Dorsolateral prefrontal cortex (tissue), 120 donors: ENCODE measurements at regions of chr3 and their contacts with region 1.

Region 1: GRCh38 chr3:47475570-47476329 is at the start of gene SCAP:
- DNase-seq: peak; percentile 81 to 93 (median 89)
- H3K4me3 ChIP-seq: peak within 1 kb of the TSS; percentile 56 to 99 (median 90)
- H3K27ac ChIP-seq: peak within 1 kb of the TSS; percentile 49 to 97 (median 89)
- H3K27me3 ChIP-seq: no peaks in the 10 kb centered on the region
- CTCF ChIP-seq: peak; percentile 78 to 100 (median 98)
- total RNA-seq, gene SCAP: 68.4 to 123 (median 92.0) TPM

Region 2: DNA sequence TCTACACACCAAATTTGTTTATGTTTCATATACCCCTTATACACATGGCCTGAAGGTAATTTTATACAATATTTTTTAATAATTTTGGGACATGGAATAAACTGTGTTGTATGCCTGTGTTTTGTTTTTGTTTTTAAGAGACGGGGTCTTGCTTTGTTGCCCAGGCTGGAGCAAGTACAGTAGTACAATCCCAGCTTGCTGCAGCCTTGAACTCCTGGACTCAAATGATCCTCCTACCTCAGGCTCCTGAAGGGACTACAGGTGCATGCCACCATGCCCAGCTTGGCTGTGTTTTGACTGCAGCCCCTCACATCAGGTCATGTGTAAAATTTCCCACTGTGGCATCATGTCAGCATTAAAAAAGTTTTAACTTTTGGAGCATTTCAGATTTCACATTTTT is 330.5 kb before region 1 on chr3:
- intact Hi-C with region 1: no loop called
- DNase-seq: no peak
- H3K4me3 ChIP-seq: no peak overlapping the region
- H3K27ac ChIP-seq: no peak overlapping the region
- H3K27me3 ChIP-seq: no peaks in the 10 kb centered on the region
- CTCF ChIP-seq: no peak

Region 3: DNA sequence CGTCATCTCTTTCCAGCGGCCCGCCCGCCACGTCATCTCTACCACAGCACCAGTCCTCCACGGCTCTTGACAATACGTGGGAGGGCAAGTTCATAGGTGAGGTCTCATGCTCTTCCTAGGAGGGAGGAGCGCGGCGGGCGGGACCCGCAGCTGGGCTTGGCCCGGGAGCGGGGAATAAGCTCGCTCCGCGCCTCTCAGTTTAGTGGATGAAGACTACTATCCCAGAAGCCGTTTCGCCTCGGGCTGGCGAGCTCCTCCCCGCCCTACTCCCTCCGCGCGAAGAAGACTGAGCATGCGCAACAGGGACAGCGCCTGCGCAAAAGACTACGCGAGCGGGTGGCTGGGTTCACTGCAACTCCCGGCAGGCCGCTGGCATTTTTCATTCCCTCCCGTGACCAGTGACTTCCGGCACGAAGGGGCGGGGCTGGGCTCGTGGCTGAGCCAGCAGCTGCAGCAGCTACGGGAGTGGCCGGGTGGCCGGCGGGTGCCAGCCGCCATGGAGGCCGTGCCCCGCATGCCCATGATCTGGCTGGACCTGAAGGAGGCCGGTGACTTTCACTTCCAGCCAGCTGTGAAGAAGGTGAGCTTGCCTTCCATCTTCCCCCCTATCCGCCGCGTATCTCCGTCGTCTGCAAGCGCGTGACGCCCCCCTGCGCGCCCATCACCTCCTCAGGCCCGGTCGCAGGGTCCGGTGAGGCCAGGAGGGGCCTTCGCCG is 95.0 kb before region 1 on chr3 and contains the start of gene PTPN23:
- intact Hi-C with region 1: loop called (anchors 2 to 5 kb)
- DNase-seq: peak; percentile 93 to 99 (median 96)
- H3K4me3 ChIP-seq: peak within 1 kb of the TSS; percentile 55 to 100 (median 91)
- H3K27ac ChIP-seq: peak within 1 kb of the TSS; percentile 25 to 98 (median 93)
- H3K27me3 ChIP-seq: no peaks in the 10 kb centered on the region
- CTCF ChIP-seq: peak in 30 of 56 donors; percentile 6 to 57 (median 30)
- total RNA-seq, gene PTPN23: 40.8 to 75.9 (median 53.6) TPM

Region 4: DNA sequence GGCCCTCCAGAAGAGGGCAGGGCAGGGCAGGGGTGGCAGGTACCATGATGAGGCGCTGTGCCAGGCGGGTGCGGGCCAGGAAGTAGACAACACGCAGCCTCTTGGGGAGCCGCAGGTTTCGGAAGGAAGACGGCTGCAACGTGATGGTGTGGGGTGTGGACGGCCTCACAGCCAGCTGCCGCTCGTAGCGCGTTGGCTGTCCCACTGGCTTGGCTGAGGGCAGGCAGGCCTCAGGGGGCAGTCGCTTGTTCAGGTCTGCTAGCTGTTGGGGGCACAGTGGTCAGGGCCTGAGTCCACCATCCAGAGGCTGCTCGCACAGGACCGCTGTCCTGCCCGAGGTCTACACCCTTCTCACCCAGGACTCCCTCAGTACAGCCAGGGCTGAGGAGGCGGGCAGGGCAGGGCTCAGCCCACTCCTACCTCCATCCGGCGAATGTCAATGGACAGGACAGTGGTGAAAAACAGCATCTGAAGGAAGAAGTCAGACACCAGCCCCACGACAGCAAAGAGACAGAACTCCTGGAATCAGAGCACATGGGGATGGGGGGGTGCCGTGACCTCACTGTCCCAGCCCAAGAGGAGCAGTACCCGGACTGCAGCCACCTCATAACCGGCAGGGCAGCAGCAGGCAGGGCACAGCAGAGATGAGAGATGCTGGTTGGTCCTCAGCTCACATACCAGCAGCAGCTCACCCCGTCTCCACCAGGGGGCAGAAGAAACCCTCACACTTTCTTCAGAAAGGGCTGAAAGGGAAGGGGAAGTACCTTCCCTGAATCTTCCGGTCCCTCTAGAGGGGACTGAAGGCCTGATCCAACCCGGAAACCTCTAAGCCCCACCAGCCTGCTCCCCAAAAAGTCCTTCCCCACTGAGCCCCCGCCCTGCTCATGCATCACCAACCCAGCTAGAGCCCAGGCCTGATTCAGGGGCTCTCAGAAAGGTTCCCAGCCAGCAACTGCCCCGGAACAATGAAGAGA is 55.0 kb before region 1 on chr3:
- intact Hi-C with region 1: loop called (anchors 2 to 5 kb)
- DNase-seq: peak; percentile 81 to 94 (median 87)
- H3K4me3 ChIP-seq: peak overlapping the region in 15 of 59 donors; percentile 4 to 50 (median 23)
- H3K27ac ChIP-seq: peak overlapping the region in 57 of 59 donors; percentile 25 to 91 (median 75)
- H3K27me3 ChIP-seq: no peaks in the 10 kb centered on the region
- CTCF ChIP-seq: peak; percentile 68 to 97 (median 91)

Region 5: GRCh38 chr3:47440131-47440530 is 35.6 kb before region 1 on chr3:
- intact Hi-C with region 1: loop called (anchors 1 kb)
- DNase-seq: peak in 4 of 10 donors; percentile 54 to 69 (median 61)
- H3K4me3 ChIP-seq: no peak overlapping the region
- H3K27ac ChIP-seq: peak overlapping the region in 50 of 59 donors; percentile 0 to 85 (median 70)
- H3K27me3 ChIP-seq: no peaks in the 10 kb centered on the region
- CTCF ChIP-seq: peak in 54 of 56 donors; percentile 24 to 83 (median 60)